ENCODE measurements at regions of chr1 and their contacts with region 1.

Region 1: GRCh38 chr1:203216274-203217138 is 13.0 kb downstream of the CHIT1 start:
- DNase-seq: peak; percentile 33 to 62 (median 50)
- H3K4me3 ChIP-seq: no peak overlapping the region
- H3K27ac ChIP-seq: no peak overlapping the region
- H3K4me1 ChIP-seq: no peaks in the 10 kb centered on the region
- H3K27me3 ChIP-seq: no peaks in the 10 kb centered on the region
- CTCF ChIP-seq: peak; percentile 58 to 72 (median 64)
- EP300 ChIP-seq: no peak
- POLR2A ChIP-seq: no peak

Region 2: DNA sequence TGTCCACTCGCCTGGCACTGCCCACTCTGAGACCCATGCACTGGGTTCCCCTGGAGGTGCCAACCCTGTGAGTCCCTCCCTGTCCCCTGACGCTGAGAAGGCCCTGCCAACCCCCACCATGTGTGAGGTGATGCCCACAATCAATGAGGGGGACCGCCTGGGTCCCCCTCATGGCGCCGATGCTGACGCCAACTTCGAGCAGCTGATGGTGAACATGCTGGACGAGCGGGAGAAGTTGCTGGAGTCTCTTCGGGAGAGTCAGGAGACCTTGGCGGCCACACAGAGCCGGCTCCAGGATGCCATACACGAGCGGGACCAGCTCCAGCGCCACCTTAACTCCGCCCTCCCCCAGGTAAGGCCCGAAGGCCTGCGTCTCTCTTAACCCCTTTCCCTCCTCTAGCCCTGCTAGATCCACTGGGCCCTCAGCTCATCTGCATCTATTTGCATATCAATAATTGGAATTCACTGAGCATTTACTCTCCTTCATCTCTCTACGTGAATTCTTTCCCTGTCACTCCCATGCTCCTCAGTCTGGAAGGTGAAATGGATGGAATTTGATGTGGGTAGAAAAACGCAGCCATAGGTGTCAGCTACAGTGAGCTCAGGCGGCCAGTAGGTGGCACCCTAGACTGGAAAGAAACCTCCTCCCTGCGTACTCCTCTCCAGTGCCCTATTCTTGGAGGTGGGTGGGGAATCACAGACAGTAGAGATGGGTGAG is 177.5 kb before region 1 on chr1:
- intact Hi-C with region 1: loop called (anchors 2 to 5 kb)
- DNase-seq: peak; percentile 64 to 81 (median 76)
- H3K4me3 ChIP-seq: no peak overlapping the region
- H3K27ac ChIP-seq: no peak overlapping the region
- H3K4me1 ChIP-seq: no peaks in the 10 kb centered on the region
- H3K27me3 ChIP-seq: no peaks in the 10 kb centered on the region
- CTCF ChIP-seq: peak; percentile 66 to 86 (median 75)
- EP300 ChIP-seq: no peak
- POLR2A ChIP-seq: no peak

Region 3: DNA sequence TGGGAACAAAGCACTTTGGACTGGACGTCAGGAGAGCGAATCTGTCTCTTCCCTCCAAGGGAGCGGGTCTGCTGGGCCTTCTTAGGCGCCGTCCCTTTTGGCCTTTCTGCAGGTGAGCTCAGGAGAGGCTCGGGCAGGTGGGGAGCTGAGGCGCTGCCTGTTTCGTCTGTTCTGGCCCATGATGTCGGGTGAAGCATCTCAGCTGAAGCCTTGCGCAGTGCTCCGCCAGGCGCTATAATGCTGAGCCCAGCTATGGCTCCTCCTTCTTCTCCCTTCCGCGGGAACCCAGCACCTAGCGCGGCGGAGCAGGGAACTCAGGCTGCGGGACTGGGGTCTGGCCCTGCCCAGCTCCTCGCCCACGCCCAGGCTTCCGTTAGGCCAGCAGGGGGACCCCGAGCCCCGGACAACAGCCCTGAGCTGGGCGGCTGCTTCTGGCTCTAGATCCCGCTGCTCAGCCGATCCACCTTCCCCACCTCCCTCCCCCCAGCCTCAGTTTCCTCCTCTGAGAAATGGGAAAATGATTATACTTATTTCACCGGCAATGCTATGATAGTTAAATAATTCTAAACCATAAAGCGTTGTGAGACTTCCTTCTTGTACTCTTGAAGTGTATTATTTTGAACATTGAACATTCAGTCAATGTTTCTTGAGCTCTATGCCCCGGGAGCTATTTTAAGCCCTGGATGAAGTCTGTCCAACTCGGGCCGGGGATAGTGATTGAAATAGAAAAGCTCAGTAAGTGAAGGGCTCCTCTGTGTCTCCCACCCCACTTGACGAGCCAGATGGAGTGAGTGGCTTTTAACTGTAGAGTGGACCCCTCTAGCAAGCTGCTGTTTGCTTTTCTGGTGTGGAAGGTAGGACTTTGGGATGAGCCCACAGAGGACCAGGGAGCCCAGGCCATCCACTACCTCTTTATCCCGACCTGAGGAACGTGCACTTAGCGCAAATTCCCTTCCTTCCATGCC is 98.6 kb before region 1 on chr1:
- intact Hi-C with region 1: loop called in 3 of 4 experiments (anchors 2 to 5 kb)
- DNase-seq: peak; percentile 52 to 86 (median 60)
- H3K4me3 ChIP-seq: no peak overlapping the region
- H3K27ac ChIP-seq: no peak overlapping the region
- H3K4me1 ChIP-seq: no peaks in the 10 kb centered on the region
- H3K27me3 ChIP-seq: no peaks in the 10 kb centered on the region
- CTCF ChIP-seq: peak in 2 of 3 donors; percentile 44 to 53
- EP300 ChIP-seq: no peak
- POLR2A ChIP-seq: no peak

Region 4: GRCh38 chr1:203127666-203128430 is 88.7 kb before region 1 on chr1 and contains the start of gene ADORA1:
- intact Hi-C with region 1: loop called in 1 of 4 experiments (anchors 5 kb)
- DNase-seq: peak; percentile 21 to 71 (median 42)
- H3K4me3 ChIP-seq: peak within 1 kb of the TSS; percentile 25
- H3K27ac ChIP-seq: no peak within 1 kb of the TSS
- H3K4me1 ChIP-seq: peaks cover 8% of the 10 kb centered on the region
- H3K27me3 ChIP-seq: no peaks in the 10 kb centered on the region
- CTCF ChIP-seq: no peak
- EP300 ChIP-seq: no peak
- POLR2A ChIP-seq: no peak
- total RNA-seq, gene ADORA1: 0.15 to 1.3 (median 0.70) TPM

Region 5: DNA sequence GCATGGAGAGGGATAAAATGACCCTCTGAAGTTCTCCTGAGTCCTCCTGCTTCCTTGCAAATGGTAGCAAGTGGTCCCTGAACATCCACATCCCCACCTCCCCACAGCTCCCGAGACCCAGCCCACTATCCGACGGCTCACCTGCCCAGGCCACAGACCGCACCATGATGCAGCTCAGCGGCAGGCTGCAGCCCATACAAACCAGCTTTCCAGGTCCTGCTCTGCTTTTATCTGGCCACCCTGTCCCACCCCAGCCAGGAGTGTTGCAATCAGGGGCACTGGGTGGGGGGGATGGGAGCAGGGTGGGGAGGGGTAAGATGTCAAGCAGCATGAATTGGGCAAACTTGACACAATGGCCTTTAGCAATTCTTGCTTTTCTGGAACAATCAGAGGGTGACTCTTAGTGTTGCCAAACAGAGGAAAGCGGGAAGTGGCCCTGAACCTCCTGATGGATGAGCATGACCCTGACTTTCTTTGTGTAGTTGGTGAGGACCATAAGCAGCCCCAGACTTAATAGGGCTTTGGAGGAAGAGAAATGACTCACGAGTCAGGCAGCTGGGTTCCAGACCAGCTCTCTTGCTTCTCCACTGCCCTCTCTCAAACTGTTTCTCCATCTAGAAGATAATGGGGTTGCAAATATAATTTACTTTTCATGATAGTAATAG is 13.1 kb after region 1 on chr1 and contains the start of gene CHIT1:
- intact Hi-C with region 1: no loop called
- DNase-seq: no peak
- H3K4me3 ChIP-seq: no peak within 1 kb of the TSS
- H3K27ac ChIP-seq: no peak within 1 kb of the TSS
- H3K4me1 ChIP-seq: no peaks in the 10 kb centered on the region
- H3K27me3 ChIP-seq: no peaks in the 10 kb centered on the region
- CTCF ChIP-seq: no peak
- EP300 ChIP-seq: no peak
- POLR2A ChIP-seq: no peak
- total RNA-seq, gene CHIT1: 0.08 to 26.9 (median 0.77) TPM in 4 of 7 donors, not detected in the others

Measured in ovary (tissue), 10 donors.